ENCODE measurements at regions of chr5 and their contacts with region 1.

Region 1: DNA sequence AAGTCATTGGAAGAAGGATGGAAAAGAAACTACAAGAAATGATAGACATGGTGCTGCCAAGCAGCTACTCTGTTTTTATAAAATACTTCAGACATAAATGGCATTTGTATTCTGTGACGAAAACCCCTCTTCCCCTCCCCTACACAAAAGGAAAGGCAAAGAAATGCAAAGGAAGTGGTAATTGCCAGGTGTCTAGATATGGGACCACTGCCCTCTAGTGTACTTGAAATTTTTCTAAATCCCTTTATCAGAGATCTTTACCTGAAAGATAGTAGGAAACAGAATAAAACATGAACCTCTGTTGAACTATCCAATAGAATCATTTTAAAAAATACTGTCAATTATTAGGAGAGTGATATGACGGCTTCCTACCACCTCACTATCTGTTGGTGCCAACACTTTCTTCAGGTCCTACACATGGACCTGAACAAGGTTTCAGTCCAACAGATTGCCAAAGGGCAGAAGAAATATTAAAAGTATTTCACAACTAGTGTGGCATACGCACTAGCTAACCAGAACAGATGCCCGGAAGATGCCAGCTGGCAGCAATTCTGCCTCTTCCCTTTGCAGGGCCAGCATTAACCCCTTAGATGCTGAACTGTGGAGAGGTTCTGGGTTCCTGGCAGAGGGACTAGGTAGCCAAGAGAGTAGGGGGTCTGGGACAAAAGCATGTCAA is 104.1 kb downstream of the TSSK1B start:
- DNase-seq: peak; percentile 22
- H3K4me3 ChIP-seq: no peak overlapping the region
- H3K27ac ChIP-seq: no peak overlapping the region
- H3K4me1 ChIP-seq: no peaks in the 10 kb centered on the region
- H3K27me3 ChIP-seq: no peaks in the 10 kb centered on the region
- CTCF ChIP-seq: peak; percentile 50

Region 2: DNA sequence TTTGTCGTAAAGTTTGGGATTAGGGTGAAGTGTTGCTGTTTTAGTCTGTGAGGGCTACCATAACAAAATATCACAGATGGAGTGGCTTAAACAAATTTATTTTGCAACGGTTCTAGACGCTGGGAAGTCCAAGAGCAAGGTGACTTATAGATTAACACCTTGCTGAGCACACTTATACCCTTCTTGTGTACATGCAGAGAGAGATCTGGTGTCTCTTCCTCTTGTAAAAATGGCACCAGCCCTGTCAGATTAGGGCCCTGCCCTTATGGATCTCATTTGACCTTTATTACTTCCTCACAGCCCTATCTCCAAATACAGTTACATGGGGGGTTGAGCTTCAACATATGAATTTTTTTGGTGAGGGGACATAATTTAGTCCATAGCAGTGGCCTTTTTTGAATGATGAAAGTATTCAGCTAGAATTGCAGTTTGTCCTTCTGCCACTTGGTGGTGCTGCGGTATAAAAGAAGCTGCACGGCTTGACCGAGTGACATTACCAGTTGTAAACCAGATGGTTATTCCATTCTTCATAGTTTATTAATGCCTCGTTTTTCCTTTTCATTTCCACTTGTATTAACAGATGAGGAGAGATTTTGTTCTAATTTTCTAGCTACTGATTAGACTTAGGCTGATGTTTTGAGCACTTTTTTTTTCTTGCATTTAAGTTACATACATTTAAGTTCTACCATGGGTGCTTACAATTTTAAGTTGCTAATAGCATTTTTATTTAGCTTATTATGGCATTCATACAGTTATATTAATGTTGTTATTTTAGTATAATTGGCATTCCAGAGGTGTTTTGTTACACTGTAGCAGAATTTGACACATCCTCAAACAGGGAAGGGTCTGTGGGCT is 334.7 kb before region 1 on chr5:
- CTCF ChIA-PET with region 1: no interaction called
- POLR2A ChIA-PET with region 1: no interaction called
- intact Hi-C with region 1: loop called (anchors 2 kb)
- DNase-seq: peak; percentile 75
- H3K4me3 ChIP-seq: no peak overlapping the region
- H3K27ac ChIP-seq: no peak overlapping the region
- H3K4me1 ChIP-seq: no peaks in the 10 kb centered on the region
- H3K27me3 ChIP-seq: no peaks in the 10 kb centered on the region
- CTCF ChIP-seq: peak; percentile 89

Region 3: GRCh38 chr5:113187906-113188305 is 142.8 kb before region 1 on chr5:
- CTCF ChIA-PET with region 1: no interaction called
- POLR2A ChIA-PET with region 1: no interaction called
- intact Hi-C with region 1: no loop called
- DNase-seq: no peak
- H3K4me3 ChIP-seq: no peak overlapping the region
- H3K27ac ChIP-seq: no peak overlapping the region
- H3K4me1 ChIP-seq: no peaks in the 10 kb centered on the region
- H3K27me3 ChIP-seq: no peaks in the 10 kb centered on the region
- CTCF ChIP-seq: no peak